ENCODE measurements at regions of chr13 and their contacts with region 1.

Region 1: DNA sequence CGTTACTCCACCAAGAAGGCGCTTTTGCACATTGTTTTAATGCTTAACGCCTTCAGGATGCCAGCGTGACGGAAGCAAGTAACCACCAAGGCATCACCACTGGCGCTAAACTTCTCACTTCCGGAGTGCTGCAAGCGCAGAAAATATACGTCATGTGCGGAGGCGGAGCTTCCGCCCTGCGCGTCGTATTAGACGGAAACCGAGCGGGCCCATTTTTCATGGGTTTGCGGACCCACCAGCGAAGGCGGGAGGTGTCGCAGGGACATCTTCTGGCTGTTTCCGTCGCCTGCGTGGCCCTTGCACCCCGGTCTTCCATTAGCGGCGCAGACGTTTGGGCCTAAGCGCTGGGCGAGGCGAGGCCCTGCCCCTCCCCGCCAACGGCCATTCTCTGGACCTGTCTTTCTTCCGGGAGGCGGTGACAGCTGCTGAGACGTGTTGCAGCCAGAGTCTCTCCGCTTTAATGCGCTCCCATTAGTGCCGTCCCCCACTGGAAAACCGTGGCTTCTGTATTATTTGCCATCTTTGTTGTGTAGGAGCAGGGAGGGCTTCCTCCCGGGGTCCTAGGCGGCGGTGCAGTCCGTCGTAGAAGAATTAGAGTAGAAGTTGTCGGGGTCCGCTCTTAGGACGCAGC is at the start of gene ERCC5:
- DNase-seq: peak; percentile 77
- H3K4me3 Mint-ChIP-seq: peak within 1 kb of the TSS; percentile 70
- H3K27ac Mint-ChIP-seq: peak within 1 kb of the TSS; percentile 52
- H3K4me1 Mint-ChIP-seq: no peaks in the 10 kb centered on the region
- H3K27me3 Mint-ChIP-seq: no peaks in the 10 kb centered on the region
- CTCF ChIP-seq: no peak
- total RNA-seq, gene ERCC5: 14.7 and 15.6 TPM in 2 replicates

Region 2: DNA sequence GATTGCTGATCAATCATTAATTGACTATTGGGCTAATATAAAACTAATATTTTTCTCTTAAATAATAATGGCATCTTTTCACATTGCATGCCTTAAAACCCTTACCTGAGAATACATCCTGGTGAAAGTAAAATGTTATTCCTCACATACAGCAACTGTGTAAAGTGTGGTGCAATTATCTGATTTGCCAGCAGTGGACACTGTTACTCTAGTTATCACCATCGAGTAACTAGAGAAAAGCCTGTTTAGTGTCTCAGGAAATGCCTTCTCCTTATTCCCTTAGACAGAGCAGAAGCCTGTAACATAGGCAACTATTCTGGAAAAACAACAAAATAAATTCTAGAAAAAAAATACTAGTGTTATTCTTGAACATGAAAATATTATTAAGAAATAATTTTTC is 903.7 kb before region 1 on chr13:
- CTCF ChIA-PET with region 1: no interaction called
- intact Hi-C with region 1: no loop called
- DNase-seq: peak; percentile 4
- H3K4me3 Mint-ChIP-seq: no peak overlapping the region
- H3K27ac Mint-ChIP-seq: no peak overlapping the region
- H3K4me1 Mint-ChIP-seq: no peaks in the 10 kb centered on the region
- H3K27me3 Mint-ChIP-seq: no peaks in the 10 kb centered on the region
- CTCF ChIP-seq: no peak

Region 3: GRCh38 chr13:102580552-102581169 is 265.1 kb before region 1 on chr13:
- CTCF ChIA-PET with region 1: no interaction called
- intact Hi-C with region 1: loop called (anchors 1 kb)
- DNase-seq: no peak
- H3K4me3 Mint-ChIP-seq: no peak overlapping the region
- H3K27ac Mint-ChIP-seq: no peak overlapping the region
- H3K4me1 Mint-ChIP-seq: no peaks in the 10 kb centered on the region
- H3K27me3 Mint-ChIP-seq: peaks cover 16% of the 10 kb centered on the region
- CTCF ChIP-seq: no peak

Region 4: DNA sequence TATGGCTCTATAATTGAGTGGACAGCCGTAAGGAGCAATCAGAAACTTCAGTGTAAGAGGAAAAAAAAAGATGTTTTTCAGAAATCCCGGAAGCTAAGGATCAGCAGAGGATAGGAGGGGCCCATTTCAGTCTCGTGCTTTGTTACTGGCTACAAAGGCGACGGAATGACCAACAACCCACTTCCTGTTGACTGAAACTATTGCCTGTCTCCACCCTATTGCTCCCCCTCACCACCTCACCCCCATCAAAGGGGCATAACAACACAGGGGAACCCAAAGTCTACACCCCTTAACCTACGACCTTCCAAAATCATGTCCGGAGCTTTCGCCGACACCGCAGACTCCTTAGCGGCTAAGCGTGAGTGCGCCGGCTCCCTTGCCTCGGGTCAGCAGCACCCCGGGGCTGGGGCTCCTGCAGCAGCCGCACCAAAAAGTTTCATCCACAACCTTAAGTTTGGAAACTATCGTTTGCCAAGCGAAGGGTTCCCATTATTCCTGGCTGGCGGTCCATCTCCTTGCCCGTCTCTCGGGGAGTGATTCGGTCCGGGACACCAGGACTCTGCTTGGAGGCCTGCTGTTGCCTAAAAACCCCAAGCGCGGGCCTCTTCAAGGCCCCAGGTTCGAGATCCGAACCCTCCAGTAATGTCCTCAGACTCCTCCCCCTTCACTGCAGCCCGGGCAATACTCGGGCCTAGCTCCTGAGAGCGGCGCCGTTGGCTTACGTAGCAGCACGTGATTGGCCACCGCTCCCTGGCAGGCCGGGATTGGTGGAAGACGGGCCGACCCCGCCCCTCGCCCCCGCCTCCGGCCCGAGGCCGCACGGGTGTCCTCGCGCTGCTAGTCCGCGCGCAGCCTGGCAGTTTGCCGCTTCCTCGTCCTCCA is 249.4 kb before region 1 on chr13 and contains the start of gene TPP2:
- CTCF ChIA-PET with region 1: interaction called, 3 read pairs
- intact Hi-C with region 1: loop called (anchors 5 kb)
- DNase-seq: peak; percentile 90
- H3K4me3 Mint-ChIP-seq: peak within 1 kb of the TSS; percentile 84
- H3K27ac Mint-ChIP-seq: peak within 1 kb of the TSS; percentile 86
- H3K4me1 Mint-ChIP-seq: peaks cover 7% of the 10 kb centered on the region
- H3K27me3 Mint-ChIP-seq: no peaks in the 10 kb centered on the region
- CTCF ChIP-seq: no peak
- total RNA-seq, gene TPP2: 17.3 and 19.1 TPM in 2 replicates

Region 5: DNA sequence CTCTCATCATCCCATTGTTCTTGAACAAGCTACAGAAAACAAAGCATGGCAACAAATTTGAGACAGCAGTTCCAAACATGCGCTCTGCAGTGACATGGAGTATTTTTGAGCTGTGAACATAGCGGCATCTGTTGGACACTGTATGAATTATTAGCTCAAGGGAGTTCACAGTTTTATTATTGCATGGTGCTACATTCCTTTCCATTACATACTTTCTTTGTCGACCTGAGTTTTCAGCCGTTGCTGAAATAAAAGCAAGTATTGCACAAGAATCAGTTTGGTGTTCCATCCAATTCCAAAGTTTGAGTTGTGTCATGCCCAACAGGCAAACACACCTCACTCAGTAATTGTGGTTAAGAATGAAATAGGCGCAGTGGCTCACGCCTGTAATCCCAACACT is 120.8 kb before region 1 on chr13:
- CTCF ChIA-PET with region 1: no interaction called
- intact Hi-C with region 1: loop called (anchors 2 kb)
- DNase-seq: peak; percentile 2
- H3K4me3 Mint-ChIP-seq: no peak overlapping the region
- H3K27ac Mint-ChIP-seq: no peak overlapping the region
- H3K4me1 Mint-ChIP-seq: peaks cover 6% of the 10 kb centered on the region
- H3K27me3 Mint-ChIP-seq: no peaks in the 10 kb centered on the region
- CTCF ChIP-seq: no peak